ENCODE measurements at regions of chr6 and their contacts with region 1.

Region 1: DNA sequence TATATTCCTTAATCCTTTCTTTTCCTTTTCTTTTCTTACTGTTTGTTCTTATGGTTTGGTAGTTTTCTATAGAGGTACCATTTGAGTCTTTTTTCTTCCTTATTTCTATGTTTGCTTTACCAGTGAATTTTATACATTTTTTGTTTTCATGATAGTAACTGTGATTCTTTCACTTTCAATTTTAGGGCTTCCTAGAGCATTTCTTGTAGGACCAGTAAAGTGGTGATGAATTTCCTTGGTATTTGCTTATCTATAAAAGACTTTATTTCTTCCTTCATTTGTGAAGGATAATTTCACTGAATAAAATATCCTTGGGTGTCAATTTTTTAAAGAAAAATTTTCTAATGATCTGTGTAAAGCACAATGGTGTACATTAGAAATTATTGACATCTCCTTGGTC is 637.4 kb downstream of the CD109 start:
- DNase-seq: no peak
- H3K4me3 ChIP-seq: no peak overlapping the region
- H3K27ac ChIP-seq: no peak overlapping the region
- H3K4me1 ChIP-seq: no peaks in the 10 kb centered on the region
- H3K27me3 ChIP-seq: no peaks in the 10 kb centered on the region
- CTCF ChIP-seq: no peak
- EP300 ChIP-seq: no peak
- POLR2A ChIP-seq: no peak

Region 2: DNA sequence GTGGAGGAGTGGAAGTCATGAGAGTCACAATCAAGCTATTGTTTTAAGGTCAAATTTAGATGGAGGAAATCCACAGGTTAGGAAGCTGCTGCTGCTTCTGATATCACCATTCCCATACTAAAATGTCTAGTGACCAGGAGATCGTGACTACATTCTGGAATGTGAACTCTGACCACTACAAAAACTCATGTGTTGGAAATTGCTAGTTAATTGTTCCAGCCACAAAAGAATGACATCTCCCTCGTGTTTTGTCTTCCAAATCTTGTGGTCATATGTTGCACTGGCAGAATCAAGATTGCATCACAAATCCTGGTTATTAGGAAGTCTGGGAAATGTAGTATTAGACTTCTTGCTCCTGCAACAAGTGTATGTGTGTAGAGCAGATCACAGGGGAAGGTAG is 195.5 kb before region 1 on chr6:
- in situ Hi-C with region 1: no loop called
- intact Hi-C with region 1: no loop called
- DNase-seq: no peak
- H3K4me3 ChIP-seq: no peak overlapping the region
- H3K27ac ChIP-seq: no peak overlapping the region
- H3K4me1 ChIP-seq: no peaks in the 10 kb centered on the region
- H3K27me3 ChIP-seq: no peaks in the 10 kb centered on the region
- CTCF ChIP-seq: no peak
- EP300 ChIP-seq: no peak
- POLR2A ChIP-seq: no peak

Region 3: GRCh38 chr6:74409447-74409846 is 76.0 kb after region 1 on chr6:
- in situ Hi-C with region 1: no loop called
- intact Hi-C with region 1: loop called (anchors 2 kb)
- DNase-seq: no peak
- H3K4me3 ChIP-seq: no peak overlapping the region
- H3K27ac ChIP-seq: no peak overlapping the region
- H3K4me1 ChIP-seq: no peaks in the 10 kb centered on the region
- H3K27me3 ChIP-seq: no peaks in the 10 kb centered on the region
- CTCF ChIP-seq: peak; percentile 28 to 44 (median 40)
- EP300 ChIP-seq: no peak
- POLR2A ChIP-seq: no peak